Heart left ventricle (tissue), 16 donors: ENCODE measurements at regions of chr9 and their contacts with region 1.

Region 1: DNA sequence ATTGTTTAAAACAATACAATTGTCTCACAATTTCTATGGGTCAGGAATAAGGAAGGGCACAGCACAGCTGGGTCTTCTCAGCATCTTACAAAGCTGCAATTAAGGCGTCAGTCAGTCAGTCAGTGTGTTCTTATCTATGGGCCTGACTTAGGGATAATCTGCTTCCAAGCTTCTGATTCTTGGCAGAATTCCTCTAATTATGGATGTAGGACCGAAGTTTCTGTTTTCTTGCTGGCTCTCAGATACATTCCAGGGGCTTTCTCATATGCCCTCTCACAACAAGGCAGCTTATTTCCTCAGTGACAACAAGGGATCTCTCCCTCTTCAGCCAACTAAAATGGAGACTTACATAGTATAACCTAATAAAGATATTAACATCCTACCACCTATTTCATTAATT is 1925.3 kb upstream of the ACO1 start:
- DNase-seq: no peak
- ATAC-seq: no peak
- H3K4me3 ChIP-seq: no peak overlapping the region
- H3K27ac ChIP-seq: no peak overlapping the region
- H3K4me1 ChIP-seq: no peaks in the 10 kb centered on the region
- H3K27me3 ChIP-seq: no peaks in the 10 kb centered on the region
- CTCF ChIP-seq: no peak
- POLR2A ChIP-seq: no peak

Region 2: DNA sequence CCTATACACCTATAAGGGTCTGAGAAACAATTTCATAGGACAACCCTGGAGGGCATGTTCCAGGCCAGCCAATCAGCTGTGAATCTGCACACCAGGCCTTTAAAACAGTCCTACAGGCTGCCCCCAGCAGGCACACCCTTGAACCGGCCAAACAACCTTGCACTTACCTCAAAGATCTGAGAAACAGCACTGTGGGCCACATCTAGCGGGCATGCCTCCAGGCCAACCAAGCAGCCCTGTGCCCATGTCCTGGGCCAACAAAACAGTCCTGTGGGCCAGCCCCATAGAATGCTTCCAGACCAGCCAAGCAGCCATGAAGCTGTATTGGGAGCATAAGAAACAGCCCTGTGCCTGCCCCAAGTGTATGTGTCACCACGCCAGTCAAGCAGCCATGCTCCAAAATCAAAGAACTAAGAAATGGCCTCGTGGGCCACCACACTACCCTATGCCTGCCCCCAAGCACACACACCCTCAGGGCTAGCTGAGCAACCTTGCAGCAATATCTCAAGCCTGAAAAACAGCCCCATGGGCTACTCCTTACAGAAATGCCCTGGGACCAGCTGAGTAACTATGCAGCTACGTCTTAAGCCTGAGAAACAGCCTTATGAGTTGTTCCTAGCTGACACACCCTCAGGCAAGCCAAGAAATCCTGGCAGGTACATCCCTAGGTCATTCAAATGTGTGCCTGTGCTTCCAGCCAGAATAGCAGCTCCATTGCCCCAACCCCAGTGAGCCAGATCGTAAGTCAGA is 642.0 kb before region 1 on chr9:
- intact Hi-C with region 1: no loop called
- DNase-seq: no peak
- ATAC-seq: no peak
- H3K4me3 ChIP-seq: no peak overlapping the region
- H3K27ac ChIP-seq: no peak overlapping the region
- H3K4me1 ChIP-seq: no peaks in the 10 kb centered on the region
- H3K27me3 ChIP-seq: no peaks in the 10 kb centered on the region
- CTCF ChIP-seq: no peak
- POLR2A ChIP-seq: no peak

Region 3: GRCh38 chr9:30411571-30411970 is 47.6 kb before region 1 on chr9:
- intact Hi-C with region 1: loop called in 1 of 10 experiments (anchors 10 kb)
- DNase-seq: peak in 1 of 5 donors; percentile 33
- ATAC-seq: no peak
- H3K4me3 ChIP-seq: no peak overlapping the region
- H3K27ac ChIP-seq: no peak overlapping the region
- H3K4me1 ChIP-seq: no peaks in the 10 kb centered on the region
- H3K27me3 ChIP-seq: no peaks in the 10 kb centered on the region
- CTCF ChIP-seq: no peak
- POLR2A ChIP-seq: no peak